Caco-2 (cell line): ENCODE measurements at regions of chr1 and their contacts with region 1.

Region 1: GRCh38 chr1:45750298-45751038 is at the start of gene IPP:
- DNase-seq: peak; percentile 96 to 97
- H3K4me3 ChIP-seq: peak within 1 kb of the TSS; percentile 53
- H3K4me3 Mint-ChIP-seq: peak within 1 kb of the TSS; percentile 94
- H3K27ac Mint-ChIP-seq: peak within 1 kb of the TSS; percentile 98
- H3K4me1 ChIP-seq: no peaks in the 10 kb centered on the region
- H3K4me1 Mint-ChIP-seq: no peaks in the 10 kb centered on the region
- H3K27me3 ChIP-seq: no peaks in the 10 kb centered on the region
- H3K27me3 Mint-ChIP-seq: no peaks in the 10 kb centered on the region
- CTCF ChIP-seq: peak in 1 of 2 experiments; percentile 17
- total RNA-seq, gene IPP: 7.6 and 7.9 TPM in 2 replicates

Region 2: DNA sequence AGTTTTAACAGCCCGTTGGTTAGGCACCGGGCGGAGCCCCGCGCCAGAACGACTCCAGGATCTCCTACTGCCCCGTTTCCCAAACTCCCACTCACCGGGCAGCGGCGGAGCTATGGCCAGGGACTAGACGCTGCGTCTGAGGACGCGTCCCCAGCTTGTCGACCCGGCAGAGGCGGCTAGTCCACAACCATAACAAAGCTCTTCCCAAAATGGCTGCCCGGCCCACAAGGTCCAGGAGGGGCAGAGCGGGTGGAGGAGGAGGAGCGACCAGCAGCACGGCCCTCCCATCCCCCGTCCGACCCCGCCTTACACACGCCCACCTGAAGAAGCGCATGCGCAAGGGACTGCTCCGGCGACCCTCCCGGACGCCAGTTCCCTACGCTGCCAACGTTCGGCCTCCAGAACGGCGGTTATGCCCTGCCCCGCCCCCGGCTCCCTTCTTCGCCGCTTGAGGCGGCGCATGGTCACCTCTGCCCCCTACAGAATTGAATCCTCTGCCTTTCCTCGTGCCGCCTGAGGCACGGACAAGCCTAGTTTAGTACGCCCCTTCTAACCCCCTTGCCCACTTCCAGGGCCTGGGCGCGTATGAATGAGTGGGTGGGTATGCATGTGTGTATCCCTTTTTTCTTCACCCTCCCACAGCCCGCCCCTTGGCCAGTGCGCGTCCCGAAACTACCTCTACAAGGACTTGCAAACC is 64.0 kb before region 1 on chr1 and contains the start of gene GPBP1L1:
- CTCF ChIA-PET with region 1: no interaction called
- POLR2A ChIA-PET with region 1: interaction called, 5 read pairs
- intact Hi-C with region 1: loop called (anchors 1 kb)
- DNase-seq: peak; percentile 95 to 97
- H3K4me3 ChIP-seq: peak within 1 kb of the TSS; percentile 77
- H3K4me3 Mint-ChIP-seq: peak within 1 kb of the TSS; percentile 84
- H3K27ac Mint-ChIP-seq: peak within 1 kb of the TSS; percentile 86
- H3K4me1 ChIP-seq: no peaks in the 10 kb centered on the region; the same call in 1 of the 2 replicates
- H3K4me1 Mint-ChIP-seq: no peaks in the 10 kb centered on the region
- H3K27me3 ChIP-seq: no peaks in the 10 kb centered on the region
- H3K27me3 Mint-ChIP-seq: no peaks in the 10 kb centered on the region
- CTCF ChIP-seq: no peak
- total RNA-seq, gene GPBP1L1: 57.3 and 61.8 TPM in 2 replicates

Region 3: DNA sequence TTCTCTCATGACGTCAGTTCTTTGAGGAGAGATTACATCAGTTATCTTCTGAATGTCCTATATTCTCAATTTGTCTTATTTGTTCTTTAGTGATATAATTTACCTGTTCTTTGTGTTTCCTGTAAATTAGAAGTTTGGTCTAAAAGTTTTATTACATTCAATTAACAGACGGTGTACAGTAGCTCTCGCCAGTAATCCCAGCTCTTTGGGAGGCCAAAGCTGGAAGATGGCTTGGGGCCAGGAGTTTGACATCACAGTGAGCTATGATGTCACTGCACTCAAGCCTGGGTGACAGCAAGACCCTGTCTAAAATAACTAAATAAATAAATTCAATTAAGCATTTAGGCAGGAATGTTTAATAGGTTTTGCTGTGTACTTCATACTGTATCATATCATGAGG is 25.3 kb after region 1 on chr1:
- CTCF ChIA-PET with region 1: no interaction called
- POLR2A ChIA-PET with region 1: no interaction called
- intact Hi-C with region 1: no loop called
- DNase-seq: no peak
- H3K4me3 ChIP-seq: no peak overlapping the region
- H3K4me3 Mint-ChIP-seq: no peak overlapping the region
- H3K27ac Mint-ChIP-seq: no peak overlapping the region
- H3K4me1 ChIP-seq: no peaks in the 10 kb centered on the region
- H3K4me1 Mint-ChIP-seq: no peaks in the 10 kb centered on the region
- H3K27me3 ChIP-seq: no peaks in the 10 kb centered on the region
- H3K27me3 Mint-ChIP-seq: no peaks in the 10 kb centered on the region
- CTCF ChIP-seq: no peak

Region 4: GRCh38 chr1:45884700-45885099 is 134.2 kb after region 1 on chr1:
- CTCF ChIA-PET with region 1: no interaction called
- POLR2A ChIA-PET with region 1: no interaction called
- intact Hi-C with region 1: no loop called
- DNase-seq: no peak
- H3K4me3 ChIP-seq: no peak overlapping the region
- H3K4me3 Mint-ChIP-seq: no peak overlapping the region
- H3K27ac Mint-ChIP-seq: no peak overlapping the region
- H3K4me1 ChIP-seq: peaks cover 8% of the 10 kb centered on the region; the same call in 1 of the 2 replicates
- H3K4me1 Mint-ChIP-seq: peaks cover under 1% of the 10 kb centered on the region
- H3K27me3 ChIP-seq: no peaks in the 10 kb centered on the region
- H3K27me3 Mint-ChIP-seq: no peaks in the 10 kb centered on the region
- CTCF ChIP-seq: no peak